ENCODE measurements at regions of chr11 and their contacts with region 1.

Region 1: GRCh38 chr11:94876645-94877442 is 96.5 kb downstream of the CWC15 start:
- DNase-seq: peak; percentile 43
- H3K4me3 Mint-ChIP-seq: peak overlapping the region; percentile 63
- H3K27ac Mint-ChIP-seq: peak overlapping the region; percentile 89
- H3K4me1 Mint-ChIP-seq: peaks cover 31% of the 10 kb centered on the region
- H3K27me3 Mint-ChIP-seq: peaks cover 2% of the 10 kb centered on the region

Region 2: GRCh38 chr11:94472916-94473799 is 403.7 kb before region 1 on chr11:
- intact Hi-C with region 1: no loop called
- DNase-seq: peak; percentile 10
- H3K4me3 Mint-ChIP-seq: peak overlapping the region; percentile 46
- H3K27ac Mint-ChIP-seq: peak overlapping the region; percentile 82
- H3K4me1 Mint-ChIP-seq: peaks cover 48% of the 10 kb centered on the region
- H3K27me3 Mint-ChIP-seq: no peaks in the 10 kb centered on the region

Region 3: GRCh38 chr11:94786264-94787126 is 90.3 kb before region 1 on chr11:
- intact Hi-C with region 1: loop called (anchors 2 kb)
- DNase-seq: no peak
- H3K4me3 Mint-ChIP-seq: no peak overlapping the region
- H3K27ac Mint-ChIP-seq: no peak overlapping the region
- H3K4me1 Mint-ChIP-seq: peaks cover 3% of the 10 kb centered on the region
- H3K27me3 Mint-ChIP-seq: peaks cover 17% of the 10 kb centered on the region

Region 4: GRCh38 chr11:94973099-94973968 is 96.5 kb after region 1 on chr11 and contains the starts of genes CWC15 and KDM4D:
- intact Hi-C with region 1: loop called (anchors 5 kb)
- DNase-seq: peak; percentile 91
- H3K4me3 Mint-ChIP-seq: peak within 1 kb of the TSS; percentile 95
- H3K27ac Mint-ChIP-seq: peak within 1 kb of the TSS; percentile 91
- H3K4me1 Mint-ChIP-seq: peaks cover 28% of the 10 kb centered on the region
- H3K27me3 Mint-ChIP-seq: no peaks in the 10 kb centered on the region
- total RNA-seq, gene CWC15: 86.1 and 94.4 TPM in 2 replicates
- total RNA-seq, gene KDM4D: 0.48 and 0.84 TPM in 2 replicates